ENCODE measurements at regions of chr1 and their contacts with region 1.

Region 1: GRCh38 chr1:26602378-26602959 is 72.9 kb downstream of the RPS6KA1 start:
- DNase-seq: peak; percentile 36
- H3K4me3 Mint-ChIP-seq: no peak overlapping the region
- H3K27ac Mint-ChIP-seq: no peak overlapping the region
- H3K4me1 Mint-ChIP-seq: peaks cover 15% of the 10 kb centered on the region
- H3K27me3 Mint-ChIP-seq: peaks cover 4% of the 10 kb centered on the region

Region 2: GRCh38 chr1:26695356-26696118 is 93.1 kb after region 1 on chr1 and contains the start of gene ARID1A:
- intact Hi-C with region 1: loop called (anchors 1 kb)
- DNase-seq: peak; percentile 96
- H3K4me3 Mint-ChIP-seq: peak within 1 kb of the TSS; percentile 90
- H3K27ac Mint-ChIP-seq: peak within 1 kb of the TSS; percentile 96
- H3K4me1 Mint-ChIP-seq: peaks cover 31% of the 10 kb centered on the region
- H3K27me3 Mint-ChIP-seq: no peaks in the 10 kb centered on the region
- total RNA-seq, gene ARID1A: 130 and 132 TPM in 2 replicates

Region 3: DNA sequence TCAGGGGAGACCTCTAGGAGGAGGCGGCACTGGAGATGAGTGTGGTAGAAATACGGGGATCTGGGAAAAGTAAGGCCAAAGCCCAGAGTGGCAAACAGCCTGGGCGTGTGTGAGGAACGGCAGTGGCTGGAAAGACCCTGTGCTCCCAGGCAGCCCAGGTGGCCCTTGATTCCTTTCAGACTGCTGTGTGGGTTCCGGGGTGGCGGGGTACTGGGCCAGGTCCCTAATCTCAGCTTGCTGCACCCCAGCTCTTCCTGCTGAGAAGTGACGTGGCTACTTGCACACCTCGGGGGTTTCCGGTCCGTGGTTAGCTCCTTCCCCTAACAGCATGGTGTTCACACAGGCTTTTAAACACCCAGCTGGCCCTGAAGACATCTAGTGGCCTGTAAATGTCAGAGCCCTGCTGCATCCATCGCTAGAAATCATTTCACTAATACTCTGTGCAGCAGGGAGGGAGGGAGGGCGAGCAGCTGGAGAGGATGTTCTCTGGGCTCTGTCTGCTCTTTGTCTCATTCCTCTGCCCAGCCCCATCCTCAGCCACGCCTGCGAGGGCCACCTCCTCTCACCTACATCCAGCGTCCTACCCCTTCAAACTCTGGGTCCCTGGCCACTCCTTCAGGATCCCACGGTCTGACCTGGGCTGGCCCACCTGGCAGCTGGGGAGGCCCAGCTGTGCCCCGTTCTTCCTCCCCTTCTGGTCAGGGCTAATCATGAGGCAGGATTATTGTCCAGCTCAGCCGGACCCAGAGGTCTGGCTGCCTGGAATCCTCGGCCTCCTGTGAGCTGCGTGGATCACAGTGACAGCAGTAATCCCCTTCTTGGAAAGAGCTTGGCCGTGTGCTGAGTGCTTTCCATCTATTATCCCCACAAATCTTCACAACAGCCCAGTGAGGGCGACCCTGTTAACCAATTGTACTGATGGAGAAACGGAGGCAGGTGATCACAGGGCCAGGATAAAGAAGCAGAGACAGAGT is 231.2 kb after region 1 on chr1:
- intact Hi-C with region 1: loop called (anchors 1 kb)
- DNase-seq: peak; percentile 89
- H3K4me3 Mint-ChIP-seq: peak overlapping the region; percentile 75
- H3K27ac Mint-ChIP-seq: peak overlapping the region; percentile 99
- H3K4me1 Mint-ChIP-seq: peaks cover 69% of the 10 kb centered on the region
- H3K27me3 Mint-ChIP-seq: no peaks in the 10 kb centered on the region

Region 4: DNA sequence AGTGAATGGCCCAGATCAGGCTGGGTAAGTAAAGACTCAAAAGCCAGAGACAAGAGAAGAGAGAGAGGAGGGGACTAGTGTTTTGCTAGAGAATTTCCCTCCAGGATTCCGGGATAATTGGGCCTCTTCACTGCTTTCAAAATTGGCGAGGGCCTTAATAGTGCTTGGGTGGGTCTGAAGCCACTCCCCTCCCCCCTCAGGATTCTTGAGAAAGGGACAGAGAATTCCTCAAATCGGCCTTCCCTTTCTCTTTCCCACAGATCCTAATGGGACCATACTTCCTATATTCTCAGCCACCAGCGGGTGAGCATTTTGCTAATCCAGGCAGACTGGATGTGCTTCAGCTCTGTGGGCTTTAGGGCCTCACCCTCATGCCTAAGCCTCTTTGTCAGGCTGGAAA is 272.4 kb after region 1 on chr1:
- intact Hi-C with region 1: loop called (anchors 1 kb)
- DNase-seq: no peak
- H3K4me3 Mint-ChIP-seq: no peak overlapping the region
- H3K27ac Mint-ChIP-seq: no peak overlapping the region
- H3K4me1 Mint-ChIP-seq: no peaks in the 10 kb centered on the region
- H3K27me3 Mint-ChIP-seq: no peaks in the 10 kb centered on the region